ENCODE measurements at regions of chr12 and their contacts with region 1.

Region 1: GRCh38 chr12:106136263-106136662 is 2.5 kb downstream of the NUAK1 start:
- DNase-seq: peak; percentile 79 to 96
- H3K4me3 ChIP-seq: peak overlapping the region in 3 of 4 experiments; percentile 14 to 78 (median 29); a peak in 5 of 8 replicates
- H3K27ac ChIP-seq: no peak overlapping the region
- H3K4me1 ChIP-seq: peaks cover 32 to 59% (median 42%) of the 10 kb centered on the region in 4 experiments
- H3K27me3 ChIP-seq: peaks cover 0 to 7% (median 0%) of the 10 kb centered on the region in 4 experiments; a peak in 1 of 7 replicates
- CTCF ChIP-seq: peak; percentile 50 to 73 (median 70)
- EP300 ChIP-seq: no peak
- POLR2A ChIP-seq: peak in 1 of 2 experiments; percentile 41; a peak in 1 of 3 replicates
- RAD21 ChIP-seq: peak; percentile 95 to 97

Region 2: GRCh38 chr12:105420659-105421240 is 715.5 kb before region 1 on chr12:
- CTCF ChIA-PET with region 1: interaction called, 29 read pairs
- POLR2A ChIA-PET with region 1: no interaction called
- DNase-seq: peak in 1 of 2 experiments; percentile 83
- H3K4me3 ChIP-seq: no peak overlapping the region
- H3K27ac ChIP-seq: no peak overlapping the region
- H3K4me1 ChIP-seq: no peaks in the 10 kb centered on the region
- H3K27me3 ChIP-seq: no peaks in the 10 kb centered on the region
- CTCF ChIP-seq: peak; percentile 51 to 90 (median 82)
- EP300 ChIP-seq: no peak
- POLR2A ChIP-seq: no peak
- RAD21 ChIP-seq: peak; percentile 100

Region 3: GRCh38 chr12:106078358-106079010 is 57.8 kb before region 1 on chr12:
- CTCF ChIA-PET with region 1: interaction called, 11 read pairs
- POLR2A ChIA-PET with region 1: interaction called, 8 read pairs
- DNase-seq: no peak
- H3K4me3 ChIP-seq: no peak overlapping the region
- H3K27ac ChIP-seq: no peak overlapping the region
- H3K4me1 ChIP-seq: peaks cover 0 to 7% (median under 1%) of the 10 kb centered on the region in 4 experiments; a peak in 6 of 7 replicates
- H3K27me3 ChIP-seq: no peaks in the 10 kb centered on the region
- CTCF ChIP-seq: no peak
- EP300 ChIP-seq: no peak
- POLR2A ChIP-seq: no peak
- RAD21 ChIP-seq: no peak

Region 4: DNA sequence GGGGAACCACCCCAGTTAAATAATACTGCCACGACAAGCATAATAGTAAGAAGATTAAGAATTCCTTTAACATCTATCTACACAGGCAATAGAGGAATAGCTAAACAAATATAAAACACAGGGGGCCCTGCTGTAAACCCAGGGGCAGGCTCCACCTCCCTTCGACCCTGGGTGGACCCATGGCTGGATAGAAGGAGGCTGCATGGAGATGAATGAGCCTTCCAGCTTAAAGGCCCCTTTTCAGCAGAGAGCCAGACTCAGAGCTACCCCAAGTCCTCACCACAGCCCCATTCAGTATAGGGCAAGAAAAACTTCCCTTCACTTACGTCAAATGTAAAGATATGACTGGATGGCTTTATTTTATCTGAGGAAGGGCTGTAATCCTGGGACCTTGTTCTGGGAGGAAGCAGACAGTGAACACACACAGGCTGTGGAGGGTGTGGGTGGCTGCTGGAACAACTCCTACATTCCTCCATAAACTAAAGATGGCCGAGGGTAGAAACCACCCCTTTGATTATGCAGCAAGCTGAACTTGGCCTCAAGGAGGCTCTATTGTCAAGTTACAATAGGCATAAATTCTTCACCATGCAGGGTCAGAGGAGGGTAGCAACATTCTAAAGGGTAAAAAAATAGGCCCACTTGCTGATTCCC is 28.0 kb before region 1 on chr12:
- CTCF ChIA-PET with region 1: interaction called, 13 read pairs
- POLR2A ChIA-PET with region 1: interaction called, 28 read pairs
- DNase-seq: peak in 1 of 2 experiments; percentile 49
- H3K4me3 ChIP-seq: peak overlapping the region in 1 of 4 experiments; percentile 23; a peak in 1 of 8 replicates
- H3K27ac ChIP-seq: peak overlapping the region; percentile 39; the same call in 1 of the 2 replicates
- H3K4me1 ChIP-seq: peaks cover 23 to 47% (median 43%) of the 10 kb centered on the region in 4 experiments
- H3K27me3 ChIP-seq: no peaks in the 10 kb centered on the region
- CTCF ChIP-seq: no peak
- EP300 ChIP-seq: no peak
- POLR2A ChIP-seq: no peak
- RAD21 ChIP-seq: peak in 1 of 2 experiments; percentile 10; a peak in 2 of 4 replicates

Region 5: DNA sequence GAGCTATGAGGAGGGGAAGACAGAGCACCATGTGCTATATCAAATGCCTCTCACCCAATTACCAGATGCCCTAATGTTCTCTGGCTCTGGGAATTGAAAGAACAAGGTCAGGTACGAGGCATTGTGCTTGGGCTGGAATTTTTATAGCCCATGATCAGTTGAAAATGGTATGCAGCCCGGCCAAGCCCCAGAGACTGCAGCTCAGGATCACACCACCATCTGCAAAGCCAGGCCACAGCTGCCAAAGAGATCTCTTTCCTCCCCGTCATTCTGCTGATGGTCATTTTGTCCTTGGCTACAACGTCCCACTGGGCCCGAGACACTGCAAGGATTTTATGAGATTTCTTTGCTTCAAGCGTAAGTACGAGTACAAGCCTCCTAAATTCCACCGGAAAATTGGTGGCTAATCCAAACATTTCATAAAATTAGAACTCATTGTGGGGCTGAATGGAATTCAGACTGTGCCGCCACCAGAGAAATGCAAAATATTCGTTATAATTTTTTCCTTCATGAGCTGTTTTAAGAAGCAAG is 12.6 kb before region 1 on chr12:
- CTCF ChIA-PET with region 1: interaction called, 11 read pairs
- POLR2A ChIA-PET with region 1: interaction called, 16 read pairs
- DNase-seq: no peak
- H3K4me3 ChIP-seq: no peak overlapping the region
- H3K27ac ChIP-seq: no peak overlapping the region
- H3K4me1 ChIP-seq: peaks cover 3 to 19% (median 9%) of the 10 kb centered on the region in 4 experiments; a peak in 6 of 7 replicates
- H3K27me3 ChIP-seq: no peaks in the 10 kb centered on the region
- CTCF ChIP-seq: no peak
- EP300 ChIP-seq: no peak
- POLR2A ChIP-seq: no peak
- RAD21 ChIP-seq: no peak

Region 6: DNA sequence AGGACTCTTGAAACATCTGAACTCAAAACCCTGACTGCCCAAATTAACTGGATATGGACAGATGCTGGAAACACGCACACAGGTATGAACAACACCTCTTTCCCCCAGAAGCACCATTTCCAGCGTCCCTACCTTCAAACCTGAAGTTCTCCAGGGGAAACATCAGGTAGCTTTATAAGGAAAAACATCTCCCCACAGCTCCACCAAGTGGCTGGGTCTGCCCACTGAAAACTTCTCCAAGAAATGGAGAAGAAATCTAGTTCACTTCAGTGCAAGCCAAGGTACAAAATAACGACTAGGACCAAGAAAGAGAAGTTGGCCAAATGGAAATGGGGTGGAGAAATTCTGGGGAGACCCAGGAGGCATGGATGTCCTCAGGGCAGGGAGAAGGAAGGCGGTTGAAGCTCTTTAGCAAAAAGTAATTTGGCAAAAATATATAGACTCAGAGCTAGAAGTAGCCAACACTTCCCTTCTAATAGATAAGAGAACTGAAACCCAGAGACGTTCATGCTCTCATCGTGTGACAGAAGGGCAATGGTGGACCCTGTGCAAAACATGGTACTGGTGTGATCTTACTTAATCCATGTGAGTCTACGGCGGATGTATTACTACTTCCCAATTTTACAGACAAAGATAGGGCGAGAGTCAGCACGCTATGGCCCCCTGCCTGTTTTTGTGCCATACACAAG is 13.0 kb after region 1 on chr12:
- CTCF ChIA-PET with region 1: interaction called, 60 read pairs
- POLR2A ChIA-PET with region 1: interaction called, 27 read pairs
- DNase-seq: no peak
- H3K4me3 ChIP-seq: no peak overlapping the region
- H3K27ac ChIP-seq: no peak overlapping the region
- H3K4me1 ChIP-seq: peaks cover 0 to 7% (median 1%) of the 10 kb centered on the region in 4 experiments; a peak in 2 of 7 replicates
- H3K27me3 ChIP-seq: no peaks in the 10 kb centered on the region
- CTCF ChIP-seq: peak; percentile 3 to 69 (median 53); a peak in 3 of 4 replicates
- EP300 ChIP-seq: no peak
- POLR2A ChIP-seq: no peak
- RAD21 ChIP-seq: peak; percentile 56 to 70

Region 7: DNA sequence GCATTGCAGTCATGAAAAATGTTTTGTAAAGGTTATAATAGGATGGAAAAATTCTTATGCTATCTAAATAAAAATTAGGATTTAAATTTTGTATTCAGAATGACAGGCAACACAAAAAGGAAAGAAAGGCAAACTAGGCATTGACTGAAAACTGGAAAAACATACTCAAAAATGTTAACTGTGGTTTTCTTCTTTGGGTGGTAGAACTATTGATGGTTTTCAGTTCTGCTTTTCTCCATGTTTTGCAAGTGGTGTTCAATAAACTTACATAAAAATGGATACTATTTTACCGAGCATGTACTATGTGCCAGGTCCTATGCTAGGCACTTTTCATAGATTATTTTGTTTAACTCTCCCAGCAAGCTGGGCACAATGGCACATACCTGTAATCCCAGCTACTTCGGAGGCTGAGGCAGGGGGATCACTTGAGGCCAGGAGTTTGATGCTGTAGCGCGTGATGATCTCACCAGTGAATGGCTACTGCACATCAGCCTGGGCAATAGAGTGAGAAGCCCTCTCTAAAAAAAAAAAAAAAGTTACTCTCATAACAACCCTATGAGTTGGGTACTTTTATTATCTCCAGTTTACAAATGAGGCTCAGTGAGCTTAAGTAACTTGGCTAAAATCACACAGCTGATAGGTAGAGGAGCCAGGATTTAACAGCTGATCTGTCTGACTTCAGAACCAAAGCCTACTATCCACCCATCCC is 139.9 kb after region 1 on chr12:
- CTCF ChIA-PET with region 1: no interaction called
- POLR2A ChIA-PET with region 1: no interaction called
- DNase-seq: no peak
- H3K4me3 ChIP-seq: no peak overlapping the region
- H3K27ac ChIP-seq: no peak overlapping the region
- H3K4me1 ChIP-seq: no peaks in the 10 kb centered on the region
- H3K27me3 ChIP-seq: no peaks in the 10 kb centered on the region
- CTCF ChIP-seq: no peak
- EP300 ChIP-seq: no peak
- POLR2A ChIP-seq: no peak
- RAD21 ChIP-seq: no peak

Measured in H1 (cell line).